ENCODE measurements at regions of chr17 and their contacts with region 1.

Region 1: GRCh38 chr17:34122515-34122914 is 132.6 kb upstream of the CCL2 start:
- DNase-seq: no peak
- H3K4me3 ChIP-seq: no peak overlapping the region
- H3K27ac ChIP-seq: no peak overlapping the region
- H3K4me1 ChIP-seq: no peaks in the 10 kb centered on the region
- H3K27me3 ChIP-seq: no peaks in the 10 kb centered on the region
- CTCF ChIP-seq: no peak
- POLR2A ChIP-seq: no peak

Region 2: GRCh38 chr17:34177642-34178041 is 55.1 kb after region 1 on chr17:
- intact Hi-C with region 1: no loop called
- DNase-seq: no peak
- H3K4me3 ChIP-seq: no peak overlapping the region
- H3K27ac ChIP-seq: no peak overlapping the region
- H3K4me1 ChIP-seq: peaks cover 7% of the 10 kb centered on the region
- H3K27me3 ChIP-seq: no peaks in the 10 kb centered on the region
- CTCF ChIP-seq: no peak
- POLR2A ChIP-seq: no peak

Region 3: DNA sequence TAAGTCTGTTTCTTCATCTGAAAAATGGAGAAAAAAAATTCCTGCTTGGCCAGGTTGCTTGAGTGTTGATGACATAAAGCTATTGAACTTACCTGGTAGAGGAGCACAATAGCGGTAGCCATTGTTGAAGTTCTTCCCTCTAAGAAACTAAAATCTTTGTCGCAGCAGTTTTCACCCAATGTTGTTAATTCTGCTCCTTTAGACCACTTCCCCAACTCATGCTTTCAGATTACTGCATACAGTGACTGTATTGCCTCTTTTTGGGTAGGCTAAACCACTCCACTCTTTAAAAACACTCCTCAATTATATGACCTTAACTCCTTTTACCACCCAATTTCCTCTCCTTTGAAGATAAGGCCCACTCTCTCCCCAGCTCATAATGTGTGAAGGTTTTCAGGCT is 96.9 kb after region 1 on chr17:
- intact Hi-C with region 1: no loop called
- DNase-seq: no peak
- H3K4me3 ChIP-seq: no peak overlapping the region
- H3K27ac ChIP-seq: no peak overlapping the region
- H3K4me1 ChIP-seq: no peaks in the 10 kb centered on the region
- H3K27me3 ChIP-seq: no peaks in the 10 kb centered on the region
- CTCF ChIP-seq: no peak
- POLR2A ChIP-seq: no peak

Region 4: GRCh38 chr17:34859652-34860051 is 737.1 kb after region 1 on chr17:
- intact Hi-C with region 1: loop called (anchors 5 kb)
- DNase-seq: no peak
- H3K4me3 ChIP-seq: no peak overlapping the region
- H3K27ac ChIP-seq: no peak overlapping the region
- H3K4me1 ChIP-seq: no peaks in the 10 kb centered on the region
- H3K27me3 ChIP-seq: no peaks in the 10 kb centered on the region
- CTCF ChIP-seq: no peak
- POLR2A ChIP-seq: no peak